ENCODE measurements at regions of chr11 and their contacts with region 1.

Region 1: DNA sequence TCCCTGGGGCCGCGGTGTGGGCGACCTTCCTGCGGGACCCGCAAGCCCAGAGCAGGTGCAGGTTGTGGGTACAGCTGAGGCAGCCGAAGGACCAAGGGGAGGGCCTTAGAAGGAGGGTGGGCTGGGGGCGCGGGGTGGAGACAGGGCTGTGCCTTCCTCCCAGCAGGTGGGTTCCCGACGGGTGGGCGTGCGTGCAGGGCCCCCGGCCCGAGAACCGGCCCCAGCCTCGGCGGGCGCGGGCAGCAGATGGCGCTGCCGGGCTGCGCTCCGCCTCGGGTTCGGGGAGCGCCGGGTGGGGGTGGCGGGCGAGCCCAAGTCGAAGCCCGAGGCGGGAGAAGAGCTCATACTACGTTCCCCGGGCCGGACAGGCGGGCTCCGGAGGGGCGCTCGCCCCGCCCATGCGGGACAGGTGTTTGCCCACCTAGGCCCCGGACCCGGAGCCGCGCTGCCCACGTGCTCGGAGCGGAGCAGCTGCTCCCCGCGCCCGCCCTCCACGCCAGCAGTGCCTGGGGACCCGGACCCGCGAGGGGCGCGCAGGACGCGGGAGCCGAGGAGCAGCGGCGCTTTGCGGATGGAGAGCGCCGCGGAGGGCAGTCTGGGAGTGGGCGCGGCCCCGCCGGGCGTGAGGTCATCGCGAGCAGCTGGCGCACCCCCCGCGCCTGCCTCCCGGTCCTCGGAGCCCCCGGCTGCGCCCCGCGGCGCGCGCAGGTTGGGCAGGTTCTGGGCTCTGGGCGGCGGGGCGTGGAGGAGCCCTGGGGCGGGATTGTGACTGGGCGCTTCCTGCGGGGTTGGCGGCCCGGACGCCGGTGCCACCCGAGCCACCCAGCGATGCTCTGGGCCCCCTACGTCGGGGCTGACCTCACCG is 25.3 kb downstream of the DUSP8 start:
- DNase-seq: peak in 1 of 2 donors; percentile 54
- ATAC-seq: peak; percentile 67 to 69
- H3K4me3 ChIP-seq: peak overlapping the region; percentile 45 to 65 (median 56)
- H3K27ac ChIP-seq: peak overlapping the region; percentile 82 to 99 (median 90)
- H3K4me1 ChIP-seq: peaks cover 12 to 22% of the 10 kb centered on the region in 2 donors
- H3K27me3 ChIP-seq: no peaks in the 10 kb centered on the region
- CTCF ChIP-seq: peak; percentile 72 to 97 (median 92)
- POLR2A ChIP-seq: peak; percentile 43 to 52

Region 2: DNA sequence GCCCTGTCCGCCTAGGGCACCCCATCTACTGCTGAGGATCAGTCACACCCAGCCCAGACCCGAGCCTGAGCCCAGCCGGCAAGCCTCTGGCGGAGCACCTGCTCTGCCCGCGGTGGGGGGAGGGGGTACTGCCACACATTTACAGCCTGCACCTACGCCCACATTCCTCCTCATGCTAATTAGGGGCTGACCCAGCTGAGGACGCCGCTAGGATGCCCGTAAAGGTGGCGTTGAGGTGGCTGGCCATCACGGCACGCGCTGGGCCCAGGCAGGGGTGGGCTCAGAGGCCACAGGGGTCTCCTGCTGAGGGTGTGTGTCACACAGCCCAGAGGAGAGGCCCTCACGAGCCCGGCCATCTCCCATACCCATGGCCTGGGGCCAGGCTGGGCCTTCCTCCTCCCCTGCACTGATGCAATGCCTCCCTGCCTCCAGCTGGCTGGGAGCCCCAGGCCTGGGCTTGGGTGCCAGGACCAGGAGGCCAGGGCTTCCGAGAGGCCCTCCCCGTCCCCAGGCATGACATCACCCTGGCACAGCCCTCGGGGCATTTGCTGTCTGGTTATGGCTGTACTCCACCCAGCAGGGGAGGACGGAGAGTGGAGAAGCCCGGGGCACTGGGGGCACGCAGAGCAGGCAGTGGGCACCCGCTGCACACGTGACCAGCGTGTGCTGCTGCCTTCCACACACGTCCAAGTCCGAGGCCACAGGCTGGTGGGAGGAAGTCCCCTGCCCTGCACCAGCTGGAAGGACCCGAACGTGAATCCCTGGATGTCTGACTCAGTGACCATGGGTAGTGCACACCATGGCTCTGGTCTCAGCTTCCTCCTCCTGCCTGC is 12.6 kb after region 1 on chr11:
- in situ Hi-C with region 1: no loop called
- intact Hi-C with region 1: loop called (anchors 1 kb)
- DNase-seq: peak; percentile 79 to 96
- ATAC-seq: peak; percentile 82 to 85
- H3K4me3 ChIP-seq: peak overlapping the region in 3 of 4 donors; percentile 17 to 27 (median 22)
- H3K27ac ChIP-seq: peak overlapping the region; percentile 87 to 95 (median 92)
- H3K4me1 ChIP-seq: peaks cover 21 to 41% of the 10 kb centered on the region in 2 donors
- H3K27me3 ChIP-seq: no peaks in the 10 kb centered on the region
- CTCF ChIP-seq: peak in 2 of 5 experiments; percentile 26 to 27
- POLR2A ChIP-seq: peak in 1 of 2 donors; percentile 43

Region 3: GRCh38 chr11:1572197-1573076 is 25.7 kb after region 1 on chr11 and contains the start of gene DUSP8:
- in situ Hi-C with region 1: no loop called
- intact Hi-C with region 1: loop called (anchors 1 kb)
- DNase-seq: peak; percentile 86 to 89
- ATAC-seq: peak; percentile 76 to 81
- H3K4me3 ChIP-seq: peak within 1 kb of the TSS; percentile 59 to 83 (median 68)
- H3K27ac ChIP-seq: peak within 1 kb of the TSS; percentile 85 to 91 (median 88)
- H3K4me1 ChIP-seq: peaks cover 5 to 54% of the 10 kb centered on the region in 2 donors
- H3K27me3 ChIP-seq: no peaks in the 10 kb centered on the region
- CTCF ChIP-seq: no peak
- POLR2A ChIP-seq: peak; percentile 78 to 86
- total RNA-seq, gene DUSP8: 2.6 to 25.9 (median 6.3) TPM

Region 4: DNA sequence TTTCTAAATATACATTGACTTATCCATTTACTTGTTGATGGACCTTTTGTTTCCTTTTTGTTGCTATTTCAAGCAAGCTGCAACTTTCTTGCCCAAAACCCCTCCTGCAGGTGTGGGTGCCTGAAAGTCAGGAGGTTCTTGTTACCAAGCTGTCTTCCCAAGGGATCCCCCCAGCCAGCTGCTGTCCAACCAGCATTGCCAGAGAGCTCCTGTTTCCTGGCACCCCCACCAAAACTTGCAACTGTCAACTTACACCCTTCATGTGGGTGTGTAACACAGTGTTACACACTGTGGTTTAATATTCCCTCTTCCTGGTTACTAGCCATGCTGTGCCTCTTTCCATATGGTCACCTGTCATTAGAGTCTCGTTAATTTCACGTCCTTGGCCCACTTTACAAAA is 39.9 kb after region 1 on chr11:
- in situ Hi-C with region 1: no loop called
- intact Hi-C with region 1: loop called (anchors 5 kb)
- DNase-seq: peak in 1 of 2 donors; percentile 74
- ATAC-seq: peak; percentile 77 to 80
- H3K4me3 ChIP-seq: no peak overlapping the region
- H3K27ac ChIP-seq: no peak overlapping the region
- H3K4me1 ChIP-seq: peaks cover 16 to 21% of the 10 kb centered on the region in 2 donors
- H3K27me3 ChIP-seq: no peaks in the 10 kb centered on the region
- CTCF ChIP-seq: no peak
- POLR2A ChIP-seq: no peak

Region 5: DNA sequence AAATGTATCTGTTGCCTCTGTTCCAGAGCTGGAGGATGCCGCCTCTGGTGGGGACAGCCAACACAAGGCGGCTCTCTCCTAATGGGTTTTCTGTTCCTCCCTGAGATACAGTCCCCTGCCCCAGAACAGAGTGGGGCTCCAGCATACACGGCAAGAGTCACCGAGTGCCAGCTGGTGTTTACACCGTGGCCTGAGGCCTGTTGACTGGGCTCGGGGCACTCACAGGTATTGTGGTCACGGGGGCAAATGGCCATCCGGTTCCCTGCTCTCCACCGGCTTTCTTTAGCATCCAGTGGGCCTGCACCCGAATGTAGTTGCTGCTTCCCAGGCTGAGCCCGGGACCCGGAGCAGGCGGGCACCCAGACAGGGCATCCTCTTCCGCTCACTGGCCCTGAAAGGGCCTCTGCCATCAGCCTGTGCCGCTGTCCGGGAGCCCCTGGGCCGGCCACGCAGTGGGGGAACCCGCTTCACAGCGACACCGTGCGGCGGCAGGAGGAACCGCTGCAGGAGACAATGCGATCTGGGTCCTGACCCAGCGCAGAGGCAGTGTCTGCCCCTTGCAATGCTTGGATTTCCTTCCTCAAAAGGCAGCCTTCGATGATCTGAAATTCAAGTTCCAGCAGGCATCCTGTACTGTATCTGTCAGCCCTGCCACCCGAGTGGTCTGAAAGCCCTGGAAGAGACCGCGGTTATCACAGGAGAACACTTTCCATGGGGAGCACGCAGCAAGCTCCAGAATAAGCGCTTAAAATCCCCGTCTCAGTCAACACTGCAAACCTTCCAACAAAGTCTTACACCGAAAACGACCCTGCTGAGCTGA is 81.9 kb after region 1 on chr11:
- in situ Hi-C with region 1: no loop called
- intact Hi-C with region 1: loop called (anchors 1 kb)
- DNase-seq: peak in 1 of 2 donors; percentile 21
- ATAC-seq: peak; percentile 81 to 91
- H3K4me3 ChIP-seq: no peak overlapping the region
- H3K27ac ChIP-seq: no peak overlapping the region
- H3K4me1 ChIP-seq: no peaks in the 10 kb centered on the region
- H3K27me3 ChIP-seq: peaks cover 0 to 11% (median 4%) of the 10 kb centered on the region in 3 donors
- CTCF ChIP-seq: peak; percentile 58 to 92 (median 79)
- POLR2A ChIP-seq: no peak

Measured in gastrocnemius medialis (tissue), 4 donors.